Cardiac septum (tissue), 1 donor: ENCODE measurements at regions of chr11 and their contacts with region 1.

Region 1: GRCh38 chr11:104254347-104254746 is 90.4 kb upstream of the PDGFD start:
- DNase-seq: no peak

Region 2: GRCh38 chr11:104238916-104239315 is 15.4 kb before region 1 on chr11:
- intact Hi-C with region 1: no loop called
- DNase-seq: no peak

Region 3: DNA sequence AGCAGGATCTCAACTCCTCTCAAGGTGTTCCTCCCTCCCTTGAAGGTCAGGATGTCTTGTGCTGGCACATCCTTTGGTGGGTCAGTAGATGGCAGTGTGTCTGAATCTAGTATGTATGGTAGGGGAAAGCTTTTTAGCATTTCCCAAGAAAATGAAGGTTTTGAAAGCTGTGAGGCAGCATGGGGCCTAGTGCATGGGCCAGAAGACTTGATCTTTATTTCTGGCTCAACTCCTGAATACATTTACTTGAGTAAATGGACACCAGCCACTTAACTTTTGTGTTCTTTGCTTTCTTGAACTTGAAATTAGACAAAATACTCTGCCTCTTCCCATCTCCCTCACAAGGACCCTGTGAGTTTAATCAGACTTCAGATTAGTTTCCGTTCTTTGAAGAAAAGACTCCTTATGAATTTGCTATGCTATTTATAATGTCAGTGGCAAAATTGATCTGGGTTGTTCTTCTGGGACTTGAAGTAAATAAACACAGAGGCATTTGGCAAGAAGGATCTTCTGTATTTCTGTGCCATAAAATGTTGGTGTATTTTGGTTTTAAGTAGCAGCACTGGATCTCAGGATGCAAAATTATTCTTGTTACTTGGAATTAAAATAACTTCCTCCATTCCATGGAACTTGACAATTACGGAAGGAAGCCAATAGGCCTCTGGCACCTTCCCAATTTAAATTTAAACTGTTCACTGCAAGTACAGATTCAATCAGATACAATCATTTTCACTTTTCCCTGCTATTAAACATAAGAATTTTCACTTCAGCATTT is 355.2 kb after region 1 on chr11:
- intact Hi-C with region 1: loop called (anchors 10 kb)
- DNase-seq: no peak